ENCODE measurements at regions of chr11 and their contacts with region 1.

Region 1: DNA sequence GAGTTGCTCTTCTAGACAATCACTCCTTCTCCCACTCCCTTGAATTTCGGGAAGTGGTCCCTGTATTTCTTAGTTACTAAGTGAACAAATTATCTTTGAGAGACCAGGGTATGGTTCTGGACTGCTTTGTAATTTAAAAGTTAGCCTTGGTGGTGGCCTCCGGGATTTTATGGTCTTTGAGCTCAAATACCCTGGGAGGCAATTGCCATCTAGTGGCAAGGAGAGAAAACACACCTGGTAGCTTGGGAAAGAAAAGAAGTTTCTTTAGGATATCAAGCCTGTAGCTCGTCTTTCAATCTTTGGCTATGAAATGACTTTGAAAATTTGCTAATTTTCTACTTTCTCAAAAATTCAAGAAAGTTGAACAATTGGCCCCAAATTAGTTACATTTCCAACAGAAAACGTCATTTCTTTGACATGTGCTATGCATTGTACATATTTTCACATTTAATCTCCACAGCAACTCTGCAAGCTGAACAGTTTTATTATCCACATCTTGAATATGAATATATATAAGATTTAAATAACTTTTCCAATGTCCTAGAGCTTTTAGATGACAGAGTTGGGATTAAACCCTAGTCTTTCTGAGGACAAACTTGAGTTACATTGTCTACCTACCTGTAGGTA is 39.1 kb downstream of the MMP27 start:
- DNase-seq: peak; percentile 50
- CTCF ChIP-seq: peak; percentile 85

Region 2: DNA sequence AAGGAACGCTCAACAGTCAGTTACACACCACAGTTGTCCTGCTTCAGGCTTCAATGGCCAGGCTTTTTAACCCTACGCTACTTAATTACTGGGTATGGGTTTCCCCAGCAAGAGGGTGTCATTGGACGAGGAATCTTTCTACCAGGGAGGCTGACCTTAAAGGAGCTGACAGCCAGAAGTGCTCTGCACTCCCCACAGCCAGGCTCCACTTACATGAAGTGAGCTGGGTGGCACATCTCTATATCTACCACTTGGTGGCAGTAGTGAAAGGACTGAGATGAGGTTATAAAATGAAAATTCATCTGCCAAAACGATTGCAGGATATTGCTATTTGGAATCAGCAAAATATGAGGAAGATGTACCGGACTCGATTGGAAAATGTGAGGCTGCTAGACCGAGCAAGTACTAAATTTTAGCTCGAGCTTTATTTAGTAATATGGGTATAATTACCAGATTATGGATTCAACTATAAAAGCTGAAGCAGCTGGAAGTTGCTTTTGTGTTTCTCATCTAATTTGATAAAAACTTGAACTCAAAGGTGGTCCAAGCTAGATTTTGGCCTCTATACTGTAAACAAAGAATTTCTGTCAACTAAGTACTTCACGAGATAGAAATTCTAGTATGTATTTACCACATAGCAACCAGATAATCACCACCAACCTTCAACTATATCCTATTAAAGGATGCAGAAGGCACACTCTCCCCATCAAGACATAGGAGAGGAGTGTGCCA is 805.6 kb before region 1 on chr11:
- CTCF ChIA-PET with region 1: interaction called, 18 read pairs
- POLR2A ChIA-PET with region 1: no interaction called
- DNase-seq: peak; percentile 28
- CTCF ChIP-seq: peak; percentile 71

Region 3: DNA sequence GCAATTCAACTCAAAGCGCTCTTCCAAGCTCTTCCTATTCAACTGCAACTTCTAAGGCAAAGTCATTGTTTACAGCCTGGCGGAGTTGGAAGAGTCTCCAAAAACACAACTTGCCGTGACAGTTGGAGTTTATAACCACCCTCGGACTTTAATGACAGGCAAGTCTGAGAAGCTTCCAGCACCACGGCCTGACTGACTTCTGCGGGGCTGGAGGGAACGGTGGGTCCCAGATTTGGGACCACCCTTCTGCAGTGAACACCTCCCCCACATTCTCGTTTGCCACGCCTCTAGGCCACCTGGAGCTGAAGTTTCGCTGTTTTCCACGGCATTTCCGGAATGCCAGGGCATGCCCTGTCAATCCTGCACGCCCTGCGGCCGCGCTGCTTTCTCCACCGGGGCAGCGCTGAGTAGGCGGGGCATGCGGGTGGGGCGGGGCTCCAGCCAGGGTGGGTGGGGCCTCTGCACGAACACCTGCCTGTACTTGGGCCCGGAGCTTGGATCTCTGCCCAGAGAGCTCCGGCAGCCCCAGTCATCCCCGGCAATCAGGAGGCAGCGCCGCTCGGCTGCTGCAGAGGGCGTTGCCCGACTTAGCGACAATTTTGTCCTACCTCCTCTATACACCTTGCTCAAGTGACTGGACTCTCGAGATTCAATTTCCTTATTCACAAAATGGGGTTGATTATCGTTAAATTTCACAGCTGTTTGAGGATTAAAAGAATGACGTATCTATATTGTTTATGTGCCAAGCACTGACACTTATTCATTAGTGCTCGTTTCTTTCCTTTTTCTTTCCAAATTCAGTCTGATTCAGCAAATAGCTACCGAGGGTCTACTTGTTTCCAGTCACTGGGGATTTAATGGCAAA is 397.9 kb before region 1 on chr11:
- CTCF ChIA-PET with region 1: interaction called, 12 read pairs
- POLR2A ChIA-PET with region 1: no interaction called
- DNase-seq: peak; percentile 91
- CTCF ChIP-seq: peak; percentile 51

Region 4: DNA sequence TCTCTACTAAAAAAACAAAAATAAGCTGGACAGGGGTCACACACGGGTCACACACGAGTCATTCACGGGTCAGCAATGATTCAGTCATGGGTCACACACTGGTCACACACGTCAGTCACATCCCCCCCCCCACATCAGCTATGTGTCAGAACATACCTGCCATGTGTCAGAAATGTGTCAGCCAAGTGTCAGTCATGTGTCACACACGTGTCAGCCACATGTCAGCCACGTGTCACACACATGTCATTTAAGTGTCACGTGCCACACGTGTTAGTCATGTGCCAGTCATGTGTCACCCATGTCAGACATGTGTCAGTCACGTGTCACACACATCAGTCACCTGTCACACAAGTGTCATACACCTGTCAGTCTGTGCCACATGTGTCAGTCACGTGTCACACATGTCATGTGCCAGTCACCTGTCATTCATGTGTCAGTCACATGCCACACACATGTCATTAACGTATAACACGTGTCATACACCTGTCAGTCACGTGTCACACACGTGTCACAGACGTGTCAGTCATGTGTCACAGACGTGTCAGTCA is 12.6 kb before region 1 on chr11:
- CTCF ChIA-PET with region 1: interaction called, 37 read pairs
- POLR2A ChIA-PET with region 1: no interaction called
- DNase-seq: no peak
- CTCF ChIP-seq: no peak

Region 5: DNA sequence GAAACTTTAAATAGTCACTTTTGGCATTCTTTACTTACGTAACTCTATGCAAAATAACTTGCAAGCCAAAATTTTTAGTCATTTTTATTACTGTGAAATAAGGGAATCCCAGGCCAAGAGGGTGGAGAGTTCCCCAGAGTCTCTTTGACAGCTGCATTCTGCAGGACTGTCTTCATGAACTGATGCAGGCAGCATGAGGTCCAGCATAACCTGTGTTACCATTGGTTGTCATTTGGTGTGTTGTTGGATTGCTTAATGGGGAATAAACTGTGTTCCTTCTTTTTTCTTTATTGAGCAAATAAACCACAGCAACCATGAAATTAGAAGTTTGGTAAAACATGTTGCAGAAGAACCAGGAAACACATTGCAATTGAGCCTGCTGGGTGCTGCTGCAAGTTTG is 14.5 kb after region 1 on chr11:
- CTCF ChIA-PET with region 1: interaction called, 42 read pairs
- POLR2A ChIA-PET with region 1: no interaction called
- DNase-seq: no peak
- CTCF ChIP-seq: no peak

Region 6: DNA sequence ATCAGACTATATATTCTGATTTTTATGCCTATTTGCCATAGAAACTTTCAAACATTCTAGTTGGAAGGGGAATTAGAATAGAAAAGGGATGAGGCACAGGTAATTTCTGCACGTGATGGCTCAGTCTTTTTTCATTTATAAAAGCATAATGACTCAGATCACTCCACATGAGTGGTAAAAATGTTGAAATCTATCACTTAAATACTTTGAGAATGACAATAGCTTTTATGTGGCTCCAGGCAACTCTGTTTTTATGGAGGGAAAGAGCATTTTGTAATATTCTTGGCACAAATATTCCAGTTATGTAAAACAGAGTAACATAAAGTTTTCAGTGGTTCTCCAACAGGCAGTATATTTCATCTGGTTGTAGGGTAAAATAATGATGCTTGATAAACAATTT is 182.9 kb after region 1 on chr11:
- CTCF ChIA-PET with region 1: no interaction called
- POLR2A ChIA-PET with region 1: no interaction called
- DNase-seq: no peak
- CTCF ChIP-seq: no peak